ENCODE measurements at regions of chr2 and their contacts with region 1.

Region 1: DNA sequence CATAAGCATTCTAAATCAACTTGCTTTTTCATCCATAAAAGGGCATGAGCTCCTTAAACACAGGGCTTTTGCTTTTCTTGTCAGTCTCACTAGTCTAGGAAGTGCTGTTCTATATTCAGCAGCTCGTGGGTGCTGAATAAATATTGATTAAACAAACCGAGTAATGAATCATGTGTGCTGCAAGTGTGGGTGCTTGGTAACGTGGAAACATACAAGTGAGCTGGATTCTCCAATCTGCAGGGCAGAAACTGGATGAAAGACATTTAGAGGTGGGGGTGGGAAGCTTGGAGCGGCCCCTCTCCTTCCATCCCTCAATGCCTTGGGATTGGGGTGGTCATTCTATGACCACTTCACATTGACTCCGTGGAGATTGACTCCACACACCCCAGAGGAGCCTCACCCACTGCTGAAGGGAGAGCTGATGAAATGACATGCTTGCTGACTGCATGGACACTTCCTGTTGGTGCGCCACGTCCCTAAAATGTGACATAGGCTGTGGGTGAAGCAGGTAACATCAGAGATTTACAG is 114.6 kb downstream of the DOCK10 start:
- DNase-seq: peak in 34 of 35 experiments; percentile 45 to 87 (median 72)
- ATAC-seq: peak; percentile 67 to 88 (median 74)
- H3K4me3 ChIP-seq: no peak overlapping the region
- H3K4me3 Mint-ChIP-seq: peak overlapping the region; percentile 23 to 61 (median 60)
- H3K27ac ChIP-seq: peak overlapping the region; percentile 91
- H3K27ac Mint-ChIP-seq: peak overlapping the region; percentile 90 to 94
- H3K4me1 ChIP-seq: peaks cover 66 to 75% of the 10 kb centered on the region in 2 experiments
- H3K4me1 Mint-ChIP-seq: peaks cover 99% of the 10 kb centered on the region in 3 donors
- H3K27me3 ChIP-seq: no peaks in the 10 kb centered on the region
- H3K27me3 Mint-ChIP-seq: no peaks in the 10 kb centered on the region

Region 2: GRCh38 chr2:224749136-224749535 is 178.6 kb before region 1 on chr2:
- CTCF ChIA-PET with region 1: no interaction called
- POLR2A ChIA-PET with region 1: no interaction called
- DNase-seq: no peak
- ATAC-seq: no peak
- H3K4me3 ChIP-seq: no peak overlapping the region
- H3K4me3 Mint-ChIP-seq: no peak overlapping the region
- H3K27ac ChIP-seq: no peak overlapping the region
- H3K27ac Mint-ChIP-seq: no peak overlapping the region
- H3K4me1 ChIP-seq: no peaks in the 10 kb centered on the region
- H3K4me1 Mint-ChIP-seq: no peaks in the 10 kb centered on the region
- H3K27me3 ChIP-seq: peaks cover 0 to 3% of the 10 kb centered on the region in 2 experiments
- H3K27me3 Mint-ChIP-seq: peaks cover 3 to 5% of the 10 kb centered on the region in 2 donors

Region 3: GRCh38 chr2:224764565-224765236 is 163.0 kb before region 1 on chr2:
- CTCF ChIA-PET with region 1: no interaction called
- POLR2A ChIA-PET with region 1: no interaction called
- DNase-seq: peak in 8 of 35 experiments; percentile 2 to 42 (median 6)
- ATAC-seq: peak; percentile 63 to 88 (median 82)
- H3K4me3 ChIP-seq: no peak overlapping the region
- H3K4me3 Mint-ChIP-seq: peak overlapping the region in 1 of 3 donors; percentile 9
- H3K27ac ChIP-seq: no peak overlapping the region
- H3K27ac Mint-ChIP-seq: peak overlapping the region; percentile 82 to 90
- H3K4me1 ChIP-seq: peaks cover 6 to 7% of the 10 kb centered on the region in 2 experiments
- H3K4me1 Mint-ChIP-seq: peaks cover 29 to 58% (median 35%) of the 10 kb centered on the region in 3 donors
- H3K27me3 ChIP-seq: no peaks in the 10 kb centered on the region
- H3K27me3 Mint-ChIP-seq: no peaks in the 10 kb centered on the region

Region 4: DNA sequence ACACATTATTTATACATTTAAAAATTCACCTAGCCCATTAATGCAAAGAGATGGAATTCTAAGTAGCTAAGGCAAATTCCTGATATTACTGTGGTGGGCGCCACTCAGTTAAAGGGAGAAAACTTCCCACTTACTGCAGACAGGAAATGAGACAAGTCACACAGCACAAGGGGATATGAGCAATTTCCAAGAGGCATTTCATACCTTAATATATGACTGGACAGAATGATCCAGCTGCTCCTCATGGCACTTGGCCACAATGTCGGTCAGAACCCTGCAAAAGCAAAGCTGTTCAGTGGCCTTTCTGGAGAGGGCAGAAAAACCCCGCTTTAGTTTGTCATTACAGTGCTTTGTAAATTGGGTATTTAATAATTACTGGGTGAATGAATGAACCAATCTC is 90.2 kb before region 1 on chr2:
- CTCF ChIA-PET with region 1: no interaction called
- POLR2A ChIA-PET with region 1: no interaction called
- DNase-seq: no peak
- ATAC-seq: no peak
- H3K4me3 ChIP-seq: no peak overlapping the region
- H3K4me3 Mint-ChIP-seq: no peak overlapping the region
- H3K27ac ChIP-seq: no peak overlapping the region
- H3K27ac Mint-ChIP-seq: peak overlapping the region in 1 of 2 donors; percentile 49
- H3K4me1 ChIP-seq: no peaks in the 10 kb centered on the region
- H3K4me1 Mint-ChIP-seq: no peaks in the 10 kb centered on the region
- H3K27me3 ChIP-seq: no peaks in the 10 kb centered on the region
- H3K27me3 Mint-ChIP-seq: no peaks in the 10 kb centered on the region

Region 5: DNA sequence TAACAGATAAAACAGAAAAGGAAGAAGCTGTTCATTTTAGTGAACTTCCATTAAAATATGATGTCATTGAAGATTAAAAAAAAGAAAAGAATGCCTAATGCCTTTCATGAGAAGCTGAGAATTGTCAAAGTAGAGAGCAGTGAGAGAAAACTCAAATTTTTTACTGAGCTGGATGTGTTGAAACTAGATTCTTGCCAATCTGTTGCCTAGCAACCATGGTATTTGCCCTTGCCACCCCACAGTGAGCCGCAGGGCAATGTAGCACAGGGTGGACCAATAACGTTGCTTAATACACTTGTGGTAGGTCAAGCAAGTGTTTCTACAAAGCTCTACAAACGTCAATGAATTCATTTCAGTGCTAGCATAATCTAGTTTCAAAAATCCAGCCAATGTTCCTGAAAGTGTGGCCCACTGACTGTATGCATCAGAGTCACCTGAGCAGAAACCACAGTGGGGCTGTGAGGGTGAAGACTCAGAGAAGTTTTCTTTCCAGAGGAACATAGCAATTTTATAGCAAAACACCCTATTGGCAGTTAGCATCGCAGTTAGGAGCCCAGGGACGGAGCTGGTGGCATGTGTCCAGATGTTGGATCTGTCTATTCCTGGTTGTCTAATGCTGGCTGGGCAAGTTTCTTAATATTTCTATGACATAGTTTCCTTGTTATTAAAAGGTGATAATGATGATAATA is 17.7 kb before region 1 on chr2:
- CTCF ChIA-PET with region 1: interaction called, 3 to 4 read pairs
- POLR2A ChIA-PET with region 1: interaction called in 1 of 2 experiments, 10 read pairs
- DNase-seq: peak in 18 of 35 experiments; percentile 9 to 56 (median 24)
- ATAC-seq: peak in 2 of 4 experiments; percentile 56 to 83
- H3K4me3 ChIP-seq: no peak overlapping the region
- H3K4me3 Mint-ChIP-seq: no peak overlapping the region
- H3K27ac ChIP-seq: no peak overlapping the region
- H3K27ac Mint-ChIP-seq: peak overlapping the region; percentile 15 to 66
- H3K4me1 ChIP-seq: peaks cover 5 to 10% of the 10 kb centered on the region in 2 experiments
- H3K4me1 Mint-ChIP-seq: peaks cover 58 to 69% (median 68%) of the 10 kb centered on the region in 3 donors
- H3K27me3 ChIP-seq: no peaks in the 10 kb centered on the region
- H3K27me3 Mint-ChIP-seq: no peaks in the 10 kb centered on the region

Region 6: DNA sequence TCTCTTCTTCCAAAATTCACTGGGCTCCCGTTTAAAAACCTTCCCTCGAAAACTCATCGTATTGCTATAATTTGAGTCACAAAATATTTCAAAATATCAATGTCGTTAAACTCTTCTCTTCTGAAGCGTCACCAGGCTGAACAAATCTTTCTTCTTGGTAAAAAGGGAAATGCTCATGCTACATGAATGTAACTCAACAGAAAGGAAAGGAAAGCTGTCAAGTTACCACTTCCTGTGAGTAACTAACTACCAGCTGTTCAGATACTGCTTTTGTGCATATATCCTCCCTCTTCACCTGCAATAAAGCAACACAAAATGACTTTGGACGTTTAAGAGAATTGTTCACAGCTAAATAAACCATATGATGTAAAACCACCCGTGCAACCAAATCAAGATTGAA is 19.2 kb after region 1 on chr2:
- CTCF ChIA-PET with region 1: interaction called, 3 to 6 read pairs
- POLR2A ChIA-PET with region 1: interaction called, 6 to 33 read pairs
- DNase-seq: peak in 3 of 35 experiments; percentile 13 to 77 (median 31)
- ATAC-seq: peak; percentile 87 to 92 (median 90)
- H3K4me3 ChIP-seq: peak overlapping the region; percentile 49 to 83
- H3K4me3 Mint-ChIP-seq: peak overlapping the region; percentile 79 to 89 (median 87)
- H3K27ac ChIP-seq: peak overlapping the region; percentile 86
- H3K27ac Mint-ChIP-seq: peak overlapping the region; percentile 90 to 94
- H3K4me1 ChIP-seq: peaks cover 34 to 68% of the 10 kb centered on the region in 2 experiments
- H3K4me1 Mint-ChIP-seq: peaks cover 83 to 91% (median 87%) of the 10 kb centered on the region in 3 donors
- H3K27me3 ChIP-seq: no peaks in the 10 kb centered on the region
- H3K27me3 Mint-ChIP-seq: no peaks in the 10 kb centered on the region

Measured in T-cell (primary cell).